Aorta (tissue), 5 donors: ENCODE measurements at regions of chr11 and their contacts with region 1.

Region 1: DNA sequence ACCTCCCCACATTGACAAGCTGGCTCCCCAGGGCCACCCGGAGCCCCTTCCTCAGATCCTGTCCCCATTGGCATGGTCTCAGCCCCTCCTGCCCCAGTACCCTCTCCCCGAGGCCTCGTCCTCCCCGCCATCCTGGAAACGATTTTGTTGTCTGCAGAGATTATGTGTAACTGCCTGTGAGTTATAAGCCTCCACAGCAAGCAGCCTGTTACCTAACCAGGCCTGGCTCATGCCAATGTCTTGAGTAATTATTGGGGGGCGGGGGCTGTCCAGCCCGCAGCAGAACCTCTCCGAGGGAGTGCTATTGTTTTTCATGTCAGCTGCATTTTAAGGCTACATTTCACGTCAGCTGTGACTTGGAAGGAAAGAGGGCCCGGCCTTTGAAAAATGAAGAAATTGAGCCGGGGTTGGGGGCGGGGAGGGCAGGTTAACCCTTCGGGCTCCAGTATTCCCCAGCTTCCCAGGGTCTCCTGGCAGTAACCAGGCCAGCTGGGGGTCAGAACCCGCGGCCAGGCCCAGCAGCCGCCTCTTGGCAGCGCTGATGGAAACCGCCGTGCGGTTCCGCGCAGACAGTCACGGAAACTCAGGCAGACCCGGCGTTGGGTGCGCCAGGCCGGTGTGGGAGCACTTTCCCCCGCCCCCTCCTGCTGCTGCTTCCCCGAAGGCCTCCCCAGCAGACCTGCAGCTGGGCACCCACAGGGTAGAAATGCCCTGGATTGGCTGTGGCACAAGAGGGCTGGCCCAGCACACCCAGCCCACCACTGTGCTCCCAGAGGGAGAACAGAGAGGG is 59.5 kb downstream of the CDKN1C start:
- DNase-seq: peak; percentile 86 to 88
- ATAC-seq: peak; percentile 91
- H3K4me3 ChIP-seq: no peak overlapping the region
- H3K27ac ChIP-seq: peak overlapping the region in 1 of 2 donors; percentile 82
- H3K4me1 ChIP-seq: no peaks in the 10 kb centered on the region
- H3K27me3 ChIP-seq: no peaks in the 10 kb centered on the region

Region 2: GRCh38 chr11:2400069-2400760 is 425.9 kb before region 1 on chr11 and contains the start of gene TSSC4:
- intact Hi-C with region 1: no loop called
- DNase-seq: peak; percentile 100
- ATAC-seq: peak; percentile 95
- H3K4me3 ChIP-seq: peak within 1 kb of the TSS; percentile 68 to 72
- H3K27ac ChIP-seq: peak within 1 kb of the TSS; percentile 87 to 95
- H3K4me1 ChIP-seq: no peaks in the 10 kb centered on the region
- H3K27me3 ChIP-seq: no peaks in the 10 kb centered on the region
- total RNA-seq, gene TSSC4: 35.2 to 44.3 TPM

Region 3: GRCh38 chr11:2791521-2792380 is 34.3 kb before region 1 on chr11:
- intact Hi-C with region 1: loop called in 1 of 2 experiments (anchors 5 kb)
- DNase-seq: peak; percentile 69 to 81
- ATAC-seq: peak; percentile 29
- H3K4me3 ChIP-seq: peak overlapping the region; percentile 23 to 50
- H3K27ac ChIP-seq: no peak overlapping the region
- H3K4me1 ChIP-seq: no peaks in the 10 kb centered on the region
- H3K27me3 ChIP-seq: no peaks in the 10 kb centered on the region

Region 4: DNA sequence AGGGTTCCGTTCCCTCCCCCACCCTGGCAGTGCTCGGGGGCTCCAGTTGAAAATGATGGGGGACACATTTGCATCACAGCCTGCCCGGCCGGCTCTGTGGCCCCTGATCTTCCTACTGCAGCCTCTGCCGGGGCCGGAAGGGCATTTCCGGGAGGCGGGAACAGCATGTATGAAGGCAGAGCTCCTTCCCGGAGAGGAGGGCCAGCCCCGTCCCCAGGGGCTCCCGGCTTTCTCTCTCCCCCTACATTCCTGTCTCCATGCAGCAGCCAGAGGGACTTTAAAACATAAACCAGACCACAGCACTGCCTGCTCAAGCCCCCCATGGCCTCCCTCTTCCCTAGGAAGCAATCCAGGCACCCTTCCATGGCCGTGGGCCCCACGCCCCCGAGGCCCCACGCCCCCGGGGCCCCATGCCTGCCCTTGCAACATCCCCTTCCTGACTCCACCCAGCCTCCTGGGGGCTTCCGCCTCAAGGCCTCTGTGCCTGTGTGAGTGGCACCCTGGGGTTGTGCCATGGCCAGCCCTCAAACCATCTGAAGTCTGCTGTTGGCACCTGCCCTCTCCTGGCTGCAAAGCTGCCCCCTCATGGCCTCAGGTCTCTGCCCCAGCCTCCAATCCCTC is 13.6 kb before region 1 on chr11:
- intact Hi-C with region 1: no loop called
- DNase-seq: peak; percentile 63 to 79
- ATAC-seq: peak; percentile 21
- H3K4me3 ChIP-seq: no peak overlapping the region
- H3K27ac ChIP-seq: no peak overlapping the region
- H3K4me1 ChIP-seq: no peaks in the 10 kb centered on the region
- H3K27me3 ChIP-seq: no peaks in the 10 kb centered on the region

Region 5: DNA sequence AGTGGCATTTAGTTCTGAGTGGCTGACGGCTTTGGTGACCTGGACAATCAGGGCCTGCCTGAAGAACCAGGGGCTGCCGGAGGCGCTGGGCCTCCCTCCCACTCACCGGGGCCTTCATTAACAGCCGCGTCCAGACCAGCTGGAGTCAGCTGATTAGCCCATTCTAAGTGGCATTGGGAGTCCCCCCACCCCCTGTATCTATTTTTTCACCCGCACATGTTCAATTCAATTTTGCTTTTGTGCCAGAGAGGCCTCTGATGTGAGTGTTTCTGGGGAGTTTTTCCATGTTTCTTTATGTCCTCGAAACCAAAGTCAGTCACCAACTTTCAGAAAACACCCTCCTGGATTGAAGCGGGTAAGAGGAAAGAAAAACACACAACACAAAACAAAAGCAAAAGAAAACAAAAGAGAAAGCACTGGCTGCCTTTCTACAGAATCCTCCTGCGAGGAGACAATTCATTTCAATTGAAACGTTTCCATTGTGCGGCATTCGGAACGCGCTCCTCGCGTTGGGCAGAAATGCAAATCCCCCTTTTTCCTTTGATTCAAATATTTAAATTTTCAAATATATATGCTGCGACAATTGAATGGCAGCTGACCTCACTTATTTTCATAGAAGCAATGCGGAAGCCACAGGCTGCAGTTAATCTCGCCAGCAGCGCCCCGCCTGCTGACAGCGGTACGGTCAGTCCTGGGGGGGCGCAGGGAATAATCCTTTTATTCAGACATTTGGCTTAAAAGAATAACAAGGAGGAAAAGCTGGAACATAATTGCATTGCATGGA is 41.8 kb after region 1 on chr11:
- intact Hi-C with region 1: no loop called
- DNase-seq: no peak
- ATAC-seq: no peak
- H3K4me3 ChIP-seq: no peak overlapping the region
- H3K27ac ChIP-seq: no peak overlapping the region
- H3K4me1 ChIP-seq: no peaks in the 10 kb centered on the region
- H3K27me3 ChIP-seq: no peaks in the 10 kb centered on the region